Endothelial cell of umbilical vein (primary cell): ENCODE measurements at regions of chr4 and their contacts with region 1.

Region 1: GRCh38 chr4:143335979-143336780 is 496 bp upstream of the GAB1 start:
- DNase-seq: peak; percentile 93
- H3K4me3 ChIP-seq: peak overlapping the region; percentile 59 to 99 (median 60)
- H3K27ac ChIP-seq: peak overlapping the region; percentile 61
- H3K4me1 ChIP-seq: peaks cover 5% of the 10 kb centered on the region
- H3K27me3 ChIP-seq: no peaks in the 10 kb centered on the region
- CTCF ChIP-seq: no peak
- POLR2A ChIP-seq: no peak

Region 2: GRCh38 chr4:142940425-142941330 is 395.5 kb before region 1 on chr4:
- CTCF ChIA-PET with region 1: no interaction called
- POLR2A ChIA-PET with region 1: no interaction called
- dilution Hi-C with region 1: no loop called
- intact Hi-C with region 1: no loop called
- DNase-seq: no peak
- H3K4me3 ChIP-seq: no peak overlapping the region
- H3K27ac ChIP-seq: no peak overlapping the region
- H3K4me1 ChIP-seq: no peaks in the 10 kb centered on the region
- H3K27me3 ChIP-seq: no peaks in the 10 kb centered on the region
- CTCF ChIP-seq: no peak
- POLR2A ChIP-seq: no peak

Region 3: DNA sequence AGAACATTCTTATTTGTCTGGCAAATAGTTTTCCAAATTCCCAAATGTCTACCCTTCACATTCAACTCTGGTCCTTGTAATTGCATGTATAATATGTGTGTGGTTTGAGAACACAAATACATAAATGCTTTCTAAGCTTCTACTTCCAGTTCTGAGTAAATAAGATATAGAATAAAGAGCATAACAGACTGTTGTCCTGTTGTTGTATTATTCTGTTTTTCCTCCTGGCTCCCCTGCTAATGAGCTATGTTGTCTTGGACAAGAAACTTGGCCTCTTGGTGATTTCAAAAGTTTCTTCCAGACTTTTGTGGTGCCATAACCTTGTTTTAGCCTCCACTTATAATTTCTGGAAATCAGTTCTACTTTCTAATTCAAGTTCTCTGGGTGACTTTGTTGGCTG is 226.8 kb before region 1 on chr4:
- CTCF ChIA-PET with region 1: no interaction called
- POLR2A ChIA-PET with region 1: no interaction called
- dilution Hi-C with region 1: no loop called
- intact Hi-C with region 1: no loop called
- DNase-seq: no peak
- H3K4me3 ChIP-seq: no peak overlapping the region
- H3K27ac ChIP-seq: no peak overlapping the region
- H3K4me1 ChIP-seq: no peaks in the 10 kb centered on the region
- H3K27me3 ChIP-seq: no peaks in the 10 kb centered on the region
- CTCF ChIP-seq: no peak
- POLR2A ChIP-seq: no peak

Region 4: DNA sequence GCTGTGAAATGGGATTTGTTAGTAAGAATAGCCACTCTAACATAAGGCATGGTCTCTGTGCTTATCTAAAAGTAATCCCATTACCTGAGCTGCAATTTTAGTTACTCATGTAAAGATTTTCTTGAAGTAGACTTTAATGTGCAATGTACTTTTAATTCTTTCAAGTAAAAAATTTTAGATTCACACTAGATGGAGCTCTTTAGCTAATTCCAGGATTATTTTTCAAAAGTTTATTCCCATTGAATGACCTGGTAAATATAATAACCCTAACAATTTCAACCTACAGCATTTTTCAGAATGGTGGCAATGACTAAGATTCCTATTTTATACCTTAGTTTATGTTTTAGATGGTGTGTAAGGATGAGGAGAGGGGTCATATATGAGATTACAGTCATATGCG is 133.4 kb before region 1 on chr4:
- CTCF ChIA-PET with region 1: interaction called, 5 read pairs
- POLR2A ChIA-PET with region 1: no interaction called
- dilution Hi-C with region 1: no loop called
- intact Hi-C with region 1: loop called (anchors 5 kb)
- DNase-seq: peak; percentile 46
- H3K4me3 ChIP-seq: no peak overlapping the region
- H3K27ac ChIP-seq: no peak overlapping the region
- H3K4me1 ChIP-seq: no peaks in the 10 kb centered on the region
- H3K27me3 ChIP-seq: no peaks in the 10 kb centered on the region
- CTCF ChIP-seq: no peak
- POLR2A ChIP-seq: no peak

Region 5: GRCh38 chr4:143358923-143359643 is 22.9 kb after region 1 on chr4:
- CTCF ChIA-PET with region 1: interaction called, 6 read pairs
- POLR2A ChIA-PET with region 1: no interaction called
- dilution Hi-C with region 1: no loop called
- intact Hi-C with region 1: loop called (anchors 1 kb)
- DNase-seq: peak; percentile 96
- H3K4me3 ChIP-seq: peak overlapping the region in 1 of 3 experiments; percentile 15
- H3K27ac ChIP-seq: peak overlapping the region; percentile 54
- H3K4me1 ChIP-seq: peaks cover 26% of the 10 kb centered on the region
- H3K27me3 ChIP-seq: no peaks in the 10 kb centered on the region
- CTCF ChIP-seq: no peak
- POLR2A ChIP-seq: no peak

Region 6: GRCh38 chr4:143381171-143382118 is 45.3 kb after region 1 on chr4:
- CTCF ChIA-PET with region 1: interaction called, 14 read pairs
- POLR2A ChIA-PET with region 1: interaction called, 3 read pairs
- dilution Hi-C with region 1: no loop called
- intact Hi-C with region 1: loop called (anchors 1 kb)
- DNase-seq: peak; percentile 98
- H3K4me3 ChIP-seq: peak overlapping the region in 1 of 3 experiments; percentile 26
- H3K27ac ChIP-seq: peak overlapping the region; percentile 53
- H3K4me1 ChIP-seq: peaks cover 24% of the 10 kb centered on the region
- H3K27me3 ChIP-seq: no peaks in the 10 kb centered on the region
- CTCF ChIP-seq: no peak
- POLR2A ChIP-seq: no peak

Region 7: DNA sequence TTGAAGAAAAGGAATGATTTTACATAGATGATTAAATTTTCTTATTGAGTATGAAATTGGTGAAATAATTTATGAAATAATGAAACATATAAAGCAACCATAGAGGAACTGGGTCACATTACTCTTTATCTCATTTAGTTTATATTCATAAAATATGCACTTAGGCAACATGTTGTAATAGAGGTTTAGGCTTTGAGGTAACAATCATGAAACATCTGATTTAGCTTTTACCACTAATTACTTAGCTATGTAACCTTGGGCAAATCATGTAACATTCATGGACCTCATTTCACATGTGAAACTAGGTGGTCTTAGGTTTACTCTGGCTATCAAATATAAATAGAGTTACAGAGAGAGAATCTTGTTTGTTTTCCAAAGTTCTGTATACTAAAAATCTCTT is 122.8 kb after region 1 on chr4:
- CTCF ChIA-PET with region 1: no interaction called
- POLR2A ChIA-PET with region 1: no interaction called
- dilution Hi-C with region 1: no loop called
- intact Hi-C with region 1: no loop called
- DNase-seq: no peak
- H3K4me3 ChIP-seq: no peak overlapping the region
- H3K27ac ChIP-seq: no peak overlapping the region
- H3K4me1 ChIP-seq: no peaks in the 10 kb centered on the region
- H3K27me3 ChIP-seq: no peaks in the 10 kb centered on the region
- CTCF ChIP-seq: no peak
- POLR2A ChIP-seq: no peak

Region 8: DNA sequence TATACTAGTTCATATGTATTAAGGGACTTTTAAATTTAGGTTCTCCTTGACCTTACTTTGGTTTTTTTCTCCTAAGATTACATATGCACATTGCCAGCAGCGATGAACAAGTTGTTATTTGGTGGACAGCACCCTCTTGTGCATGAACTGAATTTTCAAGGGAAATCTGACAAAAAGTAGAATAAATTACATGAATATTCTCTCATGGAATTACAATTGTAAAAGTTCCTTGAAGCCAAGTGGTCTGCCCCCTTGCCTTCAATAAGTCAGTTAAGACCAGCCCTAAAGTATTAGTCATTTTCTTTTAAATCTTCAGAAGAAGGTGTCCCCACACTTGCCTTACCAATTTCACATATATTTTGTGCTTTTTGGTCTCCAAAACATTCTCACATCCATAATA is 146.7 kb after region 1 on chr4:
- CTCF ChIA-PET with region 1: interaction called, 5 read pairs
- POLR2A ChIA-PET with region 1: no interaction called
- dilution Hi-C with region 1: no loop called
- intact Hi-C with region 1: loop called (anchors 1 kb)
- DNase-seq: peak; percentile 74
- H3K4me3 ChIP-seq: no peak overlapping the region
- H3K27ac ChIP-seq: no peak overlapping the region
- H3K4me1 ChIP-seq: no peaks in the 10 kb centered on the region
- H3K27me3 ChIP-seq: no peaks in the 10 kb centered on the region
- CTCF ChIP-seq: peak; percentile 26 to 42
- POLR2A ChIP-seq: no peak

Region 9: GRCh38 chr4:145097821-145098674 is 1761.9 kb after region 1 on chr4 and contains the starts of genes ABCE1 and ANAPC10:
- CTCF ChIA-PET with region 1: no interaction called
- POLR2A ChIA-PET with region 1: no interaction called
- dilution Hi-C with region 1: no loop called
- intact Hi-C with region 1: loop called (anchors 5 kb)
- DNase-seq: peak; percentile 98
- H3K4me3 ChIP-seq: peak within 1 kb of the TSS; percentile 45 to 95 (median 66)
- H3K27ac ChIP-seq: peak within 1 kb of the TSS; percentile 74
- H3K4me1 ChIP-seq: peaks cover 35% of the 10 kb centered on the region
- H3K27me3 ChIP-seq: no peaks in the 10 kb centered on the region
- CTCF ChIP-seq: peak in 1 of 2 donors; percentile 11
- POLR2A ChIP-seq: peak; percentile 82
- total RNA-seq, gene ABCE1: 107 and 114 TPM in 2 replicates
- total RNA-seq, gene ANAPC10: 21.4 and 24.0 TPM in 2 replicates